Transverse colon (tissue), 4 donors: ENCODE measurements at regions of chr1 and their contacts with region 1.

Region 1: GRCh38 chr1:6489799-6490180 is 1.7 kb downstream of the PLEKHG5 start:
- DNase-seq: peak; percentile 85
- H3K4me3 ChIP-seq: peak overlapping the region; percentile 51 to 90 (median 60)
- H3K27ac ChIP-seq: peak overlapping the region; percentile 75 to 87 (median 80)
- H3K4me1 ChIP-seq: peaks cover 7 to 49% (median 40%) of the 10 kb centered on the region in 4 donors
- H3K27me3 ChIP-seq: peaks cover 16% of the 10 kb centered on the region
- CTCF ChIP-seq: peak; percentile 92 to 97 (median 96)
- EP300 ChIP-seq: no peak
- POLR2A ChIP-seq: no peak

Region 2: GRCh38 chr1:6624710-6625583 is 135.2 kb after region 1 on chr1 and contains the start of gene THAP3:
- in situ Hi-C with region 1: loop called in 3 of 4 experiments (anchors 25 kb)
- intact Hi-C with region 1: no loop called
- DNase-seq: peak; percentile 92
- H3K4me3 ChIP-seq: peak within 1 kb of the TSS; percentile 67 to 91 (median 84)
- H3K27ac ChIP-seq: peak within 1 kb of the TSS; percentile 90 to 94 (median 92)
- H3K4me1 ChIP-seq: peaks cover 10 to 22% (median 17%) of the 10 kb centered on the region in 4 donors
- H3K27me3 ChIP-seq: no peaks in the 10 kb centered on the region
- CTCF ChIP-seq: no peak
- EP300 ChIP-seq: no peak
- POLR2A ChIP-seq: peak; percentile 6
- total RNA-seq, gene THAP3: 7.5 to 21.0 (median 13.2) TPM

Region 3: GRCh38 chr1:6646499-6647148 is 156.8 kb after region 1 on chr1:
- in situ Hi-C with region 1: loop called (anchors 10 to 25 kb)
- intact Hi-C with region 1: loop called (anchors 2 kb)
- DNase-seq: no peak
- H3K4me3 ChIP-seq: no peak overlapping the region
- H3K27ac ChIP-seq: no peak overlapping the region
- H3K4me1 ChIP-seq: no peaks in the 10 kb centered on the region
- H3K27me3 ChIP-seq: no peaks in the 10 kb centered on the region
- CTCF ChIP-seq: peak; percentile 50 to 64 (median 58)
- EP300 ChIP-seq: no peak
- POLR2A ChIP-seq: no peak